ENCODE measurements at regions of chr10 and their contacts with region 1.

Region 1: GRCh38 chr10:25725918-25726716 is 207.9 kb upstream of the MYO3A start:
- DNase-seq: no peak
- ATAC-seq: peak; percentile 78
- H3K4me3 ChIP-seq: no peak overlapping the region
- H3K27ac ChIP-seq: no peak overlapping the region
- H3K4me1 ChIP-seq: no peaks in the 10 kb centered on the region
- H3K27me3 ChIP-seq: no peaks in the 10 kb centered on the region
- CTCF ChIP-seq: peak; percentile 53 to 63 (median 61)
- EP300 ChIP-seq: no peak
- POLR2A ChIP-seq: no peak
- RAD21 ChIP-seq: peak; percentile 61

Region 2: DNA sequence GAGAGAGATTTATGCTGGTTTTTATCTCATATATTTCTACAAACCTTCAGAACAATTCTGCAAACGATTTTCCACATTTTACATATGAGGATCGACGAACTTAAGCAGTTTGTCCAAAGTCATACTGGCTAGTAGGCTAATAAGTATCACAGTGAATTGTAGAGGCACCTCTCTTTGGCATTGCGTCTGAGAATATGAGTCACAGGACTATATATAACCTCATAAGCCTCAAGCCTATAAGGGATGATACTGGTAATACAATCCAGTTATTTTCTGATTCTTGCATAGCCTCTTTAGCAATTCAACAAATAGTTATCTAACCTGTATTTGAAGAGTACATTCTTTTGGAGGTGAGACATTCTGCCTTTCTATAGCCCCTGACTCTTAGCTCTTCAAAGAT is 421.5 kb before region 1 on chr10:
- CTCF ChIA-PET with region 1: no interaction called
- POLR2A ChIA-PET with region 1: no interaction called
- RAD21 ChIA-PET with region 1: no interaction called
- SMC1A ChIA-PET with region 1: no interaction called
- in situ Hi-C with region 1: no loop called
- intact Hi-C with region 1: no loop called
- DNase-seq: no peak
- ATAC-seq: no peak
- H3K4me3 ChIP-seq: no peak overlapping the region
- H3K27ac ChIP-seq: no peak overlapping the region
- H3K4me1 ChIP-seq: no peaks in the 10 kb centered on the region
- H3K27me3 ChIP-seq: no peaks in the 10 kb centered on the region
- CTCF ChIP-seq: no peak
- EP300 ChIP-seq: no peak
- POLR2A ChIP-seq: no peak
- RAD21 ChIP-seq: no peak

Region 3: DNA sequence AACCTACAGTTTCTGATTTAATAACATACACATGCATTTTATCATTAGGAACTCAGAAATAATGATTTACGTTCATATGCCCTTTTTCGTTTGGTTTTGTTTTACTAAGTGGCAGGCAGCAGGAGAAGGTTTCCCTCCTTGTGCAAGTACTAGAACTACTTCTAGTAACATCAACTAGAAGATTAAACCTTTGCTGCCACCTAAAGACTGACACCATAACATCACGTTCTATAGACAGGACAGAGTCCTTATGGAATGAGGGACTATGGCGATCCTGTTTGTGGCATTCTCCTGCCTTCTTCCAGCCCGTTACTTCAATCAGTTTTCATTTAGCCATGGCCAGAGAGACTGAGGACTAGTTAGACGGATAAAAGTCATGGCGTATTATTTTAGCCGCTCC is 543.6 kb after region 1 on chr10:
- CTCF ChIA-PET with region 1: no interaction called
- POLR2A ChIA-PET with region 1: no interaction called
- RAD21 ChIA-PET with region 1: no interaction called
- SMC1A ChIA-PET with region 1: no interaction called
- in situ Hi-C with region 1: no loop called
- intact Hi-C with region 1: loop called (anchors 10 kb)
- DNase-seq: no peak
- ATAC-seq: peak; percentile 52; the same call in 2 of the 3 replicates
- H3K4me3 ChIP-seq: no peak overlapping the region
- H3K27ac ChIP-seq: no peak overlapping the region
- H3K4me1 ChIP-seq: no peaks in the 10 kb centered on the region
- H3K27me3 ChIP-seq: peaks cover 0 to 1% of the 10 kb centered on the region in 2 experiments; a peak in 2 of 4 replicates
- CTCF ChIP-seq: peak; percentile 12 to 36 (median 25); a peak in 4 of 6 replicates
- EP300 ChIP-seq: no peak
- POLR2A ChIP-seq: no peak
- RAD21 ChIP-seq: peak; percentile 53